Naive thymus-derived CD4-positive, alpha-beta T cell (primary cell): ENCODE measurements at regions of chr2 and their contacts with region 1.

Region 1: GRCh38 chr2:30472326-30472725 is 25.3 kb downstream of the LCLAT1 start:
- DNase-seq: peak in 1 of 9 donors; percentile 14
- ATAC-seq: no peak
- H3K4me3 ChIP-seq: no peak overlapping the region
- H3K4me3 Mint-ChIP-seq: no peak overlapping the region
- H3K27ac ChIP-seq: no peak overlapping the region
- H3K27ac Mint-ChIP-seq: peak overlapping the region in 2 of 9 donors; percentile 0 to 25
- H3K4me1 ChIP-seq: peaks cover 0 to 20% of the 10 kb centered on the region in 2 donors
- H3K4me1 Mint-ChIP-seq: peaks cover 14 to 78% (median 40%) of the 10 kb centered on the region in 7 donors
- H3K27me3 ChIP-seq: no peaks in the 10 kb centered on the region
- H3K27me3 Mint-ChIP-seq: no peaks in the 10 kb centered on the region

Region 2: GRCh38 chr2:30208452-30208851 is 263.9 kb before region 1 on chr2:
- CTCF ChIA-PET with region 1: interaction called, 63 read pairs
- POLR2A ChIA-PET with region 1: interaction called, 16 read pairs
- intact Hi-C with region 1: loop called (anchors 1 kb)
- DNase-seq: peak in 4 of 9 donors; percentile 19 to 42 (median 28)
- ATAC-seq: peak; percentile 69
- H3K4me3 ChIP-seq: peak overlapping the region; percentile 3
- H3K4me3 Mint-ChIP-seq: peak overlapping the region; percentile 14 to 80 (median 68)
- H3K27ac ChIP-seq: peak overlapping the region; percentile 25
- H3K27ac Mint-ChIP-seq: peak overlapping the region in 8 of 9 donors; percentile 82 to 95 (median 88)
- H3K4me1 ChIP-seq: peaks cover 8 to 33% of the 10 kb centered on the region in 2 donors
- H3K4me1 Mint-ChIP-seq: peaks cover 14 to 44% (median 35%) of the 10 kb centered on the region in 7 donors
- H3K27me3 ChIP-seq: no peaks in the 10 kb centered on the region
- H3K27me3 Mint-ChIP-seq: peaks cover 0 to 7% (median 0%) of the 10 kb centered on the region in 5 donors

Region 3: DNA sequence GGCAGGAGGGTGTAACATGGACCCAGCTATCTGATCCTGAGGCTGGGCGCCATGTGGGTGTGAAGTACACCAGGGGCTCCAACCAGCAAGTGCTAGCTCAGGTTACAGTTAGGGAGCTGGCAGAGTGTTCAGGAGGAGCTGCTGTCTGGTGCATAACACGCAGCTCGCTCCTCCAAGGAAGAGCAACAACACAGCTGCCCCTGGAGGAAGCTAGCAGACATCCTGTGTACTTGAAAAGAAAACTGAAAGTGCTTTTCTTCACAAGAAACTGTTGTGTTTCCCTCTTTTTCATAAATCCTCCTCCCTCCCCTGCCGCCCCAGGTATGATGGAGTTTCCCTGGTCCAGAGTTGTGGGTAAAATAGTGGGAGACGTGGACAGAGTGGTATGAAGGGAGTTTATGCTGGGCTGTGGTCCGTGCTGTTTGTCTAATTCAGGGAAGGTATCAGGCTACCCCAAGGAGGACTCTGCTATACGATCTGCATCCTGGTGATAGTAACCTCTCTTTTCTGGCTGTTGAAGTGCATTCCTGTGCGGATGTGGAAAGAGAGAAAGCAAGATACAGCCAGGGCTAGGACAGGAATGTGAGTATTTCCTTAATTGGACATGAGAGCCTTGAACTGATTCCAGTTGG is 247.1 kb before region 1 on chr2:
- CTCF ChIA-PET with region 1: interaction called, 4 read pairs
- POLR2A ChIA-PET with region 1: interaction called, 3 read pairs
- intact Hi-C with region 1: loop called in 1 of 2 experiments (anchors 1 kb)
- DNase-seq: peak in 8 of 9 donors; percentile 46 to 77 (median 72)
- ATAC-seq: peak; percentile 81
- H3K4me3 ChIP-seq: peak overlapping the region; percentile 67
- H3K4me3 Mint-ChIP-seq: peak overlapping the region; percentile 87 to 99 (median 94)
- H3K27ac ChIP-seq: peak overlapping the region; percentile 95
- H3K27ac Mint-ChIP-seq: peak overlapping the region; percentile 95 to 100 (median 100)
- H3K4me1 ChIP-seq: peaks cover 63 to 67% of the 10 kb centered on the region in 2 donors
- H3K4me1 Mint-ChIP-seq: peaks cover 48 to 86% (median 76%) of the 10 kb centered on the region in 7 donors
- H3K27me3 ChIP-seq: no peaks in the 10 kb centered on the region
- H3K27me3 Mint-ChIP-seq: peaks cover 0 to 3% (median 0%) of the 10 kb centered on the region in 5 donors

Region 4: GRCh38 chr2:30239308-30239985 is 232.9 kb before region 1 on chr2:
- CTCF ChIA-PET with region 1: interaction called, 28 read pairs
- POLR2A ChIA-PET with region 1: interaction called, 6 read pairs
- intact Hi-C with region 1: loop called in 1 of 2 experiments (anchors 2 kb)
- DNase-seq: peak; percentile 55 to 79 (median 74)
- ATAC-seq: peak; percentile 88
- H3K4me3 ChIP-seq: peak overlapping the region; percentile 45
- H3K4me3 Mint-ChIP-seq: peak overlapping the region; percentile 65 to 98 (median 92)
- H3K27ac ChIP-seq: peak overlapping the region; percentile 97
- H3K27ac Mint-ChIP-seq: peak overlapping the region; percentile 61 to 100 (median 90)
- H3K4me1 ChIP-seq: peaks cover 75 to 87% of the 10 kb centered on the region in 2 donors
- H3K4me1 Mint-ChIP-seq: peaks cover 68 to 97% (median 89%) of the 10 kb centered on the region in 7 donors
- H3K27me3 ChIP-seq: no peaks in the 10 kb centered on the region
- H3K27me3 Mint-ChIP-seq: no peaks in the 10 kb centered on the region

Region 5: DNA sequence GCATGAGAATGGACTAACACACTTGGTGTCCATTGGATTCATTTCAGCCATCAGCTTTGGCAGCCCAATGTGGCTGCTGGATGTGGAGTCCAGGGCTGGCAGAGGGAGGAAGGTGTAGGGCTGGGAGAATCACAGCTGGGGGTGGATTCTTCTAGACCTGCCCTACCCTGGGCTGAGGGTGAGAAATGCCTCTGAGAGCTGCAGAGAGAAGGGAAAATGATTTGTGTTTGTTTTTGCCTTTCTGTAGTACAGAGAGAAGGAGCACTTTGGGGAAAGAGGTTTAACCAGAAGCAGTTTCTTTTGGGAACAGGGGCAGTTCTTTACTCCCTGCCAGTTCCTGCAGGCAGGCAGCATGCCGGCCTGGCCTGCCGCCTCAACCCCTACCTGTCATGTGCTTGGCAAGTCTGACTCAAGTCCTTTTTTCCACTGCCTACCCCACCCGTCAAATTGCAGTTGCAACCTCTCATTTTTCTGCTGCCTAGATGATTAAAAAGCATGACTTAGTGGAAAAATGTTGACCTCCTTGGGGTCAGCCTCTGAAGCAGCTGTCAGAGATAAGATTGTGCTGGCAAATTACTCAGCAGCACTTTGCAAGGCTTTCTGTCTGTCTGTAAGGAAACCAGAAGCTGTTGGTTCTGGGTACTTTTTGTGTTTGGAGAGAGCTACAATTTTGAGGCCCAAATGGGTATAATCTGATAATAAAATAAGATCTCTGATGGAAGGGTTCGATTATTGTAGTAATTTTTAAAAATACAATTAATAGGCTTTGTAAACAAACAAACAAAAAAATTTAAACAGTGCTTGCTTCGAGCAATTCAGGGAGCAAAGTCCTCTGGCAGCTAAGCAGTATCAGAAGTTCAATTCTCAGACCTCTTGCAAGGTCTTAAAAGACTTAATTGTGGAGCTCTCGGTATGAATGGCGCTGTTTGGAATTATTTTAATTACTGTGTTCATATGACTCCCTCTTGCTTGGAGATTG is 219.3 kb before region 1 on chr2:
- CTCF ChIA-PET with region 1: interaction called, 5 read pairs
- POLR2A ChIA-PET with region 1: interaction called, 5 read pairs
- intact Hi-C with region 1: loop called in 1 of 2 experiments (anchors 1 kb)
- DNase-seq: peak in 4 of 9 donors; percentile 38 to 83 (median 53)
- ATAC-seq: peak; percentile 36
- H3K4me3 ChIP-seq: no peak overlapping the region
- H3K4me3 Mint-ChIP-seq: peak overlapping the region; percentile 53 to 79 (median 72)
- H3K27ac ChIP-seq: peak overlapping the region; percentile 86
- H3K27ac Mint-ChIP-seq: peak overlapping the region; percentile 72 to 100 (median 97)
- H3K4me1 ChIP-seq: peaks cover 77 to 93% of the 10 kb centered on the region in 2 donors
- H3K4me1 Mint-ChIP-seq: peaks cover 65 to 99% (median 97%) of the 10 kb centered on the region in 7 donors
- H3K27me3 ChIP-seq: no peaks in the 10 kb centered on the region
- H3K27me3 Mint-ChIP-seq: no peaks in the 10 kb centered on the region

Region 6: GRCh38 chr2:30421604-30422443 is 50.5 kb before region 1 on chr2:
- CTCF ChIA-PET with region 1: interaction called, 4 read pairs
- POLR2A ChIA-PET with region 1: interaction called, 5 read pairs
- intact Hi-C with region 1: loop called in 1 of 2 experiments (anchors 2 kb)
- DNase-seq: peak in 5 of 9 donors; percentile 24 to 68 (median 44)
- ATAC-seq: peak; percentile 10
- H3K4me3 ChIP-seq: peak overlapping the region; percentile 32
- H3K4me3 Mint-ChIP-seq: peak overlapping the region; percentile 41 to 76 (median 70)
- H3K27ac ChIP-seq: peak overlapping the region; percentile 70
- H3K27ac Mint-ChIP-seq: peak overlapping the region; percentile 91 to 98 (median 93)
- H3K4me1 ChIP-seq: peaks cover 24 to 48% of the 10 kb centered on the region in 2 donors
- H3K4me1 Mint-ChIP-seq: peaks cover 35 to 64% (median 54%) of the 10 kb centered on the region in 7 donors
- H3K27me3 ChIP-seq: no peaks in the 10 kb centered on the region
- H3K27me3 Mint-ChIP-seq: no peaks in the 10 kb centered on the region